ENCODE measurements at regions of chr6 and their contacts with region 1.

Region 1: GRCh38 chr6:40308533-40309306 is 278.4 kb downstream of the LRFN2 start:
- DNase-seq: peak; percentile 78
- H3K4me3 ChIP-seq: no peak overlapping the region
- H3K27ac ChIP-seq: no peak overlapping the region
- H3K4me1 ChIP-seq: peaks cover 0 to 3% (median 0%) of the 10 kb centered on the region in 6 donors
- H3K27me3 ChIP-seq: peaks cover 0 to 24% (median 7%) of the 10 kb centered on the region in 7 donors
- CTCF ChIP-seq: peak; percentile 71 to 95 (median 90)
- POLR2A ChIP-seq: no peak

Region 2: DNA sequence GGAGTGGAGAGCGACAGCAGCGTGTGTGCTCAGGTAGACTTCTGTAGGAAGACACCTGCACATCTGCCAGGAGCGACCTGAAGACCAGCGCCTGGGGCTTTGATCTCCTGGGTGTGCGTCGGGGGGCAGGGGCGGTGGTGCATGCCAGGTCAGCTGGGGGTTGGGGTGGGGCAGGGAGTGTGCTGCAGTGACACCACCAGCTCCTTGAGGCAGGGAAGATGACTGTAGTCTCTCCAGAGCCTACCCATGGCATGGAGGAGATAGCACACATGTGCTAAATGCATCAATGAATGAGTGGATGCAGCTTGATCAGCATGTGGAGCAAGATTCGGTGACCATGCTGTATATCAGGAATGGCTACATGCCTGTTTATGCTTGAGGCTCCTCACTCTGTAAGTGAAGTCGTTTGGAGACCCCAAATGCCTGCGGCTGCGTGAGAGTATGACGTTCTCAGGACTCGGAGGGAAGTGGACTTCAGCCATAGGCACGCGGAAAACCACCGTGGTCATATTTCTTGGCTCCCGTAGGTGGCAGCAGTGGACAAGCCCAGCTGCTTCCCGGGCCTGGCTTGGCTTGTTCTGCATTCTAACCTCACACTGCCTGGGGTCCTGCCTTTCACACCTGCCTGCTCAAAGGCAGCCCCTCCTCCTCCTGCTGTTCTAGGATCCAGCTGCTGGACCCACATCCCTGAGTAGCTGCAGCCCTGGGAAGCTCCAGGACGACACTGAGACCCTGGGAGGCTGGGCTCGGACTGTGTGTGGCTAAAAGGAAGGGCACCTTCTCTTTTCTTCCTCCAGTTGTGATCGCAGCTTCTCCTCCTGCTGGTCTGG is 946.8 kb before region 1 on chr6:
- intact Hi-C with region 1: loop called (anchors 5 kb)
- DNase-seq: peak; percentile 84
- H3K4me3 ChIP-seq: peak overlapping the region in 1 of 8 donors; percentile 21
- H3K27ac ChIP-seq: no peak overlapping the region
- H3K4me1 ChIP-seq: peaks cover 0 to 14% (median 6%) of the 10 kb centered on the region in 6 donors
- H3K27me3 ChIP-seq: peaks cover 0 to 13% (median 0%) of the 10 kb centered on the region in 7 donors
- CTCF ChIP-seq: peak in 10 of 11 experiments; percentile 21 to 78 (median 68)
- POLR2A ChIP-seq: no peak

Region 3: DNA sequence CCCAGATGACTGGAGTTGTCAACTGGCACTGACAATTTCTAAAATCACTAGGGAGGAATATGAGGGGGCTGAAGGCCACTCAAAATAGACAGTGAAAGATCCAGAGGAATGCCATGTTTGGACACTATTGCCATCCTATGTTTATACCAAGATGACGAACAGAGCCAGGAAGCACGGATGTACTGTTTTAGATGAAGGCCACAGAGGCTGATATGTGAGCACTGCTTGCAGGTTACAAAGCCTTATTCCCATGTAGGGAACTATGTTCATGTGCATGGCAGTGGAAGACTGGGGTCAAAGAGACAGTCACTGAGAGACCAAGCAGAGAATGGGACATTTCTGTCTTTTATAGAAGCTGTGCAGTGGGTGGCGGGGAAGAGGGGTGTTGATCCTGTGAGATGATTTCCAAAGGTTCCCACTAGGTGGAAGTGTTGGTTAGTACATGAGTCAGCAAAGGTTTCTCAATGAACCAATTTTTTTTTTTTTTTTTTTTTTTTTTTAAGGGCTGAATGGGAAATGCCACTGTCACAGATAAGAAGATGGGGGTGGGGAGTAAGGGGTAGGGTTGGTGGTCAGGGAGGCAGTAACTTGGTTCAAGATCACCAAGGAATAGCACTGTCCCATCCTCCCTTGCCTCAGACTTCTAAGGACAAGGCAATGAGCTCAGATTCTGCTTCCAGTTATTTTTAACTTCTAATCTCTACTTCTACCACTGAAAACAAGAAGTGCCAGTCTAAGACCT is 327.7 kb before region 1 on chr6:
- intact Hi-C with region 1: loop called (anchors 2 kb)
- DNase-seq: no peak
- H3K4me3 ChIP-seq: no peak overlapping the region
- H3K27ac ChIP-seq: no peak overlapping the region
- H3K4me1 ChIP-seq: no peaks in the 10 kb centered on the region
- H3K27me3 ChIP-seq: peaks cover 0 to 14% (median 0%) of the 10 kb centered on the region in 7 donors
- CTCF ChIP-seq: peak in 9 of 11 experiments; percentile 21 to 57 (median 43)
- POLR2A ChIP-seq: no peak

Region 4: DNA sequence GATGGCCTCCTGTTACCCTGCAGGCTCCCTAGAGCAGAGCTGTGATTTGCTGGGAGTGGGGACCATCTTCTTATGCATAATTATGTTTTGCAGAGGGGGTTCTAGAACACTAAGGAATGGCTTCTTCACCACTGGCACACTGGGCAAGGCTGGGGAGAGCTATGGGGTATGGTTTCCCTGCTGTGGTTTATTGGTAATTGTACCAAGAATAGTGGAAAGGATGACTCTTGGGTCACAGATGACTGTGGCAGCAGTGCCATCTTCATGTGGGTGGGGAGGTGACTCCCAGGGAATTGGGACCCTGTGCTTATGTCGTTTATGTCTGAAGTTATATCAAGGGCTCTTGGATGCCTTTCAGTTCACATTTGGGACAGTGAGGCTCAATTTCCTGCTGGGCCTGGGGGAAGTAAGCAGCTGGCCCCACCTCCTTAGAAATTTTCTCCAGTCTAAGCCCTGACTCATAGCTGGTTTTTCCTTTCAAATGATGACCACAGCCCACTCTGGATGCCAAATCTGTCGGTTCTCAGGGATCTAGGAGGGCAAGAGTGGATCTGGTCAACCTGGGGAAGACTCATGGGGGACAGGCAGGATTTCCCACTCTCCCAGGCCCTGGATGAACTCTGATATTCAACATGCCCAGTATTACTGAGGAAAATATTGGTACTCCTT is 47.7 kb after region 1 on chr6:
- intact Hi-C with region 1: no loop called
- DNase-seq: no peak
- H3K4me3 ChIP-seq: no peak overlapping the region
- H3K27ac ChIP-seq: no peak overlapping the region
- H3K4me1 ChIP-seq: peaks cover 0 to 12% (median 0%) of the 10 kb centered on the region in 6 donors
- H3K27me3 ChIP-seq: peaks cover 0 to 19% (median 0%) of the 10 kb centered on the region in 7 donors
- CTCF ChIP-seq: no peak
- POLR2A ChIP-seq: no peak